ENCODE measurements at regions of chr6 and their contacts with region 1.

Region 1: GRCh38 chr6:118735320-118735719 is 83.9 kb upstream of the CEP85L start:
- DNase-seq: peak in 4 of 14 experiments; percentile 31 to 48 (median 32)
- ATAC-seq: peak; percentile 34
- H3K4me3 ChIP-seq: no peak overlapping the region
- H3K4me3 Mint-ChIP-seq: no peak overlapping the region
- H3K27ac ChIP-seq: no peak overlapping the region
- H3K27ac Mint-ChIP-seq: no peak overlapping the region
- H3K4me1 ChIP-seq: peaks cover 7% of the 10 kb centered on the region
- H3K4me1 Mint-ChIP-seq: peaks cover 24% of the 10 kb centered on the region
- H3K27me3 ChIP-seq: no peaks in the 10 kb centered on the region
- H3K27me3 Mint-ChIP-seq: no peaks in the 10 kb centered on the region
- CTCF ChIP-seq: peak; percentile 48

Region 2: DNA sequence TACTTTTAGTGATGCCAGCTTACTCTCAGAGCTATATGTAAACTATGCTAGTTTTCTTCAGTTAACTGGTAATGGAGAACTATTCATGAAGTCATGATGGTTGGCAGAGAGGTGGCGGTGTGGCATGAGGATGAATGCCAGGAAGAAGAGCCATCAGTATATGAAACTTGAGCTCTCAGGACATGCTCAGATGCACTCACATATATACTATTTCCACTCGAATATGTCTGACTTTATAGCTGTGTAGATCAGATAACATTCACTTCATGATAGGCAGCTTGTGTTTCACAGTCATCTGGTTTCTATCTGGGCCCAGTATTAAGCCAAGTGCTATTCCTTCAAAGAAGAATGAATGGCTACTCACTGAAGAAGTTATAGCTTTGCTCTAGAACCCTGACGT is 37.8 kb before region 1 on chr6:
- CTCF ChIA-PET with region 1: no interaction called
- POLR2A ChIA-PET with region 1: no interaction called
- intact Hi-C with region 1: loop called in 1 of 2 experiments (anchors 5 kb)
- DNase-seq: peak in 5 of 14 experiments; percentile 12 to 44 (median 27)
- ATAC-seq: peak; percentile 68
- H3K4me3 ChIP-seq: no peak overlapping the region
- H3K4me3 Mint-ChIP-seq: no peak overlapping the region
- H3K27ac ChIP-seq: no peak overlapping the region
- H3K27ac Mint-ChIP-seq: peak overlapping the region; percentile 31
- H3K4me1 ChIP-seq: peaks cover 10% of the 10 kb centered on the region
- H3K4me1 Mint-ChIP-seq: peaks cover 90% of the 10 kb centered on the region
- H3K27me3 ChIP-seq: no peaks in the 10 kb centered on the region
- H3K27me3 Mint-ChIP-seq: no peaks in the 10 kb centered on the region
- CTCF ChIP-seq: no peak

Region 3: GRCh38 chr6:118748311-118749062 is 13.2 kb after region 1 on chr6:
- CTCF ChIA-PET with region 1: no interaction called
- POLR2A ChIA-PET with region 1: no interaction called
- intact Hi-C with region 1: no loop called
- DNase-seq: no peak
- ATAC-seq: no peak
- H3K4me3 ChIP-seq: no peak overlapping the region
- H3K4me3 Mint-ChIP-seq: no peak overlapping the region
- H3K27ac ChIP-seq: no peak overlapping the region
- H3K27ac Mint-ChIP-seq: peak overlapping the region; percentile 2
- H3K4me1 ChIP-seq: peaks cover 10% of the 10 kb centered on the region
- H3K4me1 Mint-ChIP-seq: peaks cover 22% of the 10 kb centered on the region
- H3K27me3 ChIP-seq: no peaks in the 10 kb centered on the region
- H3K27me3 Mint-ChIP-seq: no peaks in the 10 kb centered on the region
- CTCF ChIP-seq: no peak

Measured in CD4-positive, alpha-beta T cell (primary cell).